ENCODE measurements at regions of chr21 and their contacts with region 1.

Region 1: GRCh38 chr21:41419911-41420862 is 5.9 kb upstream of the MX1 start:
- DNase-seq: peak; percentile 89 to 91
- H3K4me3 ChIP-seq: peak overlapping the region; percentile 57 to 80
- H3K27ac ChIP-seq: peak overlapping the region; percentile 89 to 98
- H3K4me1 ChIP-seq: no peaks in the 10 kb centered on the region
- H3K27me3 ChIP-seq: no peaks in the 10 kb centered on the region
- CTCF ChIP-seq: no peak
- POLR2A ChIP-seq: peak in 1 of 2 donors; percentile 34

Region 2: DNA sequence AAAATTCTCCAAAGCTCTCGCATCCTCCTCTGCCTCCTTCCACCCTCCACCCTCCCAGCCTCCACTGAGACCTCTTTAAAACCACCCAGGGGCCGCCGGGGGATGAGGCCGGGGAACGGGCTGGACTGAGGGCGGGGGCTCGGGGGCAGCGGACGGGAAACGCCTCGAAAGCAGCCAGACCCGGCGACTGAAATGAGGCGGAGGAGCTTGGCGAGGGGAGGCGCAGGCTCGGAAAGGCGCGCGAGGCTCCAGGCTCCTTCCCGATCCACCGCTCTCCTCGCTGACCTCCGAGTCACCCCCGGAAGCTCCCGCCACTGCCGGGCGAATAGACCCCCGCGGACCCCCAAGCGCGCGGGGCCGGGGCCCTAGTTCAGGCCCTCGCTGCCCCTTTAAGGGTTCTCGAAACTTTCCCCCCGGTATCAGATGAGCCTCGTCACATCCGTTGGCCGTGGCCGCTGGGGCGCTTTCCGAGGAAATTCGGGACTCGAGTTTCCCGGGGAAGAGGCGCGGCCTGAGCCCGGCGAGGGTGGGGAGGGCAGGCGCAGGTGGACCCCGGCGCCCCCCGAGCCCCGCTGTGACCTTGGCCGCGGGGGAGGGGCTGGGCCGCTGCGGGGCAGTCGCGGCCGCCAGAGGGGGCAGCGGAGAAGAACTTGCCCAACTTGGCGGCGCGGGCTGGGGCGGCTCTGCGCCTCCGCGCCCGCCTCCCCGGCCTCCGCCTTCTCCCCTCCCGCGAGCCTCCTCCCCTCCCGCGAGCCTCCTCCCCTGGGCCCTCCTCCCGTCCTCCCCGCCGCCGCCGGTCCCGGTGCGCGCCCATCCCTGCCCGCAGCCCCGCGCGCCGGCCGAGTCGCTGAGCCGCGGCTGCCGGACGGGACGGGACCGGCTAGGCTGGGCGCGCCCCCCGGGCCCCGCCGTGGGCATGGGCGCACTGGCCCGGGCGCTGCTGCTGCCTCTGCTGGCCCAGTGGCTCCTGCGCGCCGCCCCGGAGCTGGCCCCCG is 252.5 kb before region 1 on chr21 and contains the start of gene BACE2:
- intact Hi-C with region 1: loop called (anchors 10 kb)
- DNase-seq: peak; percentile 79 to 83
- H3K4me3 ChIP-seq: peak within 1 kb of the TSS; percentile 70
- H3K27ac ChIP-seq: peak within 1 kb of the TSS; percentile 90 to 97
- H3K4me1 ChIP-seq: peaks cover 0 to 10% of the 10 kb centered on the region in 2 donors
- H3K27me3 ChIP-seq: no peaks in the 10 kb centered on the region
- CTCF ChIP-seq: peak; percentile 26 to 82 (median 74)
- POLR2A ChIP-seq: peak in 1 of 2 donors; percentile 68
- total RNA-seq, gene BACE2: 22.8 to 98.8 (median 76.5) TPM

Measured in uterus (tissue), 4 donors.